ENCODE measurements at regions of chr13 and their contacts with region 1.

Region 1: DNA sequence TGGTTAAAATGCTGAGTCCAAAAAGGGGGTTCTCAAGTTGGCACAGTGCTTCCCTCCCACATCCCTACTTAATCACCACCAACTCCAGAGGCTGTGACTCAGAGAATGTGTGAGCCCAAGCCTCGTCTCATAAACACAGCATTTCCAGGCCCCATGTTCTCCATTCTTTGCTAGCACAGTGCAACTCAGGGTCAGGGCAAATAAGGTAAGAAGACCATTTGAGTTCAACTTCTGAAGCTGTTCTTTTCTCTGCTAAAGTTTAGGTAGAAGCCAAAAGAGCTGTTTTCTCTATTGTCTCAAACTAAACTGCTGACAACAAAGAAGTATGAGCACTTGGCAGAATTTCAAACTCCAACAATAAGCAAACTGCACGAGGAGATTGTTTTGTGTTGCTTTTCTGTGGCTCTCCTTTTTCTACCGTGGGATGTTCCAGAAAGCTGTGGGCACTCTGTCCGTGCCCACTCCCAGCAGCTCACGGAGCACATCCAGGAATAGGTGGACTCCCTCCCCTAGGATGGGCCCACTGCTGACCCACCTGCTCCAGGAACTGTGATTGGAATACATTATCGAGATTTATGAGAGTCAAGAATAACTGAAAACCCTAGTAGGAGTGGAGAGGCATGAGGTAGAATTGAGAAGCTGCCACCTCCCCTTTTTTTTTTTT is 494.3 kb downstream of the COG6 start:
- DNase-seq: no peak
- H3K4me3 Mint-ChIP-seq: no peak overlapping the region
- H3K27ac Mint-ChIP-seq: peak overlapping the region; percentile 42
- H3K4me1 Mint-ChIP-seq: peaks cover 49% of the 10 kb centered on the region
- H3K27me3 Mint-ChIP-seq: no peaks in the 10 kb centered on the region

Region 2: DNA sequence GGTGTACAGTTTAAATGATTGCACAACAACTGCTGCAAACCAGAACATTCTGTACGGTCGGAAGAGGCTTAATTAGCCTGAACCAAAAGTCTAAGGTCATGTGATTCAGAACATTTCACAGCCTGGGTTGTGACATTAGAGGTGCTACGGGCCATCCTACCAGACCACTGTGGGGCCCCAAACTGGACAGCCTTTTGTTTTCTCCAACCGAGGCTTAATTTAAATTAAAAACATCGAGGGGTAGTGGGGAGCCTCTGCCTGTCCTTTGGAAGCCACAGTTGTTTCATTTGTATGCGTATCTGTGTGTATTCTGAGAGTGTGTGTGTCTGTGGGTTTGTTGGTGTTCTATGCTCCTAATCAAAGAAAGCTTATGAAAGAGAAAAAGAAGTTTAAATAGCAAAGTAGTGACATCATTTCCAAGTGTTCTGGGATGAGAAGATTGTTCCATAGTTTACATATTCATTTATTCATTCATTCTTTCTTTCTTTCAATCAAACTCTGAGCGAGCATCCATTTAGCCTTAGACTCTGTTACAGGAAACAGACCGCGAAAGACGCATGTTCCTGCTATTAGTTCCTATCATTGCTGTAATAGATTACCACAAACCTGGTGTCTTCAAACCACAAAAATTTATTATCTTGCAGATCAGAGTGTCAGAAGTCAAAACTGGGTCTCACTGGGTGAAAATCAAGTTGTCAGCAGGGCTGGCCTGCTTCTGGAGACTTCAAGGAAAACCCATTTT is 71.9 kb after region 1 on chr13:
- intact Hi-C with region 1: loop called (anchors 5 kb)
- DNase-seq: peak; percentile 74
- H3K4me3 Mint-ChIP-seq: peak overlapping the region; percentile 49
- H3K27ac Mint-ChIP-seq: peak overlapping the region; percentile 45
- H3K4me1 Mint-ChIP-seq: peaks cover 36% of the 10 kb centered on the region
- H3K27me3 Mint-ChIP-seq: no peaks in the 10 kb centered on the region

Region 3: DNA sequence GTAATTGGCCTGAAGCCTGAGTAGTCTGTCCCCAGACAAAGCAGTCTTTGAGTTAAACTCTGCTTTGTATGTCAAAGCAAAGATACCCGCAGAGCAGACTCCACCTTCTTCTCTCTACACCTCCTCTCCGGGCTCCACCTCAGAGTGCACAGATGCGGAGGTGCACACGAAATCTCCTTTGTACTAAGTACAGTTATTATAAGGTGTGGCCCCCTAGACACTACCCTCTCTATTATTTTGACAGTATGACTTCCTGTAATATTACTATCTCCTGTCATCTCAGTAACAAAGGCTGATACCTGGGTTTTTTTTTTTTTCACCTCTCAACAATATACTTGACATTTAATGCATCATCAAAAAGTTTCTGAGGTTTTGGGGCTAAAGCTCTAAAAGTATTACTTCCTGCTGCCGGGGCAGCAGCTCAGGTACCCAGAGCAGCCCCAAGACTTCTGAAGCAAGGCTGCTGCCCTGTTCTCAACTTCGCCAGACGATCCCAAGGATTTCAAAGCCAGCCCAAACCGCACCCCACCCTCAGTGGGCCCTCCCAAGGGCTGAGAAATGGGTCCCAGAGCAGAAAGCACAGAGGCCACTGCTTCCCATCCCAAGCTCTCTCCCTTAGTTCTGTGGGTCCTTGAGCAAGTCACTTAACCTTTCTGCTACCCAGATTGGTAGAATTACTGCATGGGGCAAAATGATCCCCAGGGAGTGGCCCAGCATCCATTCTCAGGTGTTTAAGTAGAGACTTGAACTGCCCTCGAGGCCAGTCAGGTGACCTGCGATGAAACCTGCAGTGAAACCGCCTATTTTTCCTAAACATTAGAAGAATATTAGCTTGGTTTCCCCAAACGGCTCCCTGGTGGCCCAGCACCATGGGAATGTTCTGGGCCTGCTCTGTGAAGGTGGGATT is 336.1 kb after region 1 on chr13:
- intact Hi-C with region 1: no loop called
- DNase-seq: peak; percentile 87
- H3K4me3 Mint-ChIP-seq: peak overlapping the region; percentile 69
- H3K27ac Mint-ChIP-seq: peak overlapping the region; percentile 90
- H3K4me1 Mint-ChIP-seq: peaks cover 55% of the 10 kb centered on the region
- H3K27me3 Mint-ChIP-seq: no peaks in the 10 kb centered on the region